PC-3 (cell line): ENCODE measurements at regions of chr10 and their contacts with region 1.

Region 1: DNA sequence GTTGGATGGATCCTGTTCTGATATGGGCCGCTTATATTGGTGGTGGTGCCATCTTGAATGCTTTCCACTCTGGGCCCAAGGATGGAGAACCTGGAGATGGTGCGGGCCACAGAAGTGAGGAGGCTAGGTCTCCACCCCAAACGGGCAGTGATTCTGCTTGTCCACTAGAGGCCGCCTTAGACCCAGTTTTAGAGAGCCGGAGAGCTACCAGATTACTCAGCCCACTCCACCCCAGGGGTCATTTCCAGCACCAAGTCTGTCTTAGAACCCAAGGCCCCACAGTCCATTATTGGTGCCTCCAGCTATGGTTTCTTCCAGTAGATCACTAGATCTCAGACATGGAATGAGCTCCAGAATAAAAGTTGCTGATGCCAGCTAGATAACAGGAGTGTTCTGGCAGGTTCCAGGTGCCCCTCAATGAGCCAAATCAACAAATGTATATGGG is 11.8 kb upstream of the CAMK2G start:
- DNase-seq: peak; percentile 100
- ATAC-seq: peak; percentile 49
- H3K4me3 ChIP-seq: no peak overlapping the region
- H3K27ac ChIP-seq: peak overlapping the region; percentile 82
- H3K4me1 ChIP-seq: peaks cover 57% of the 10 kb centered on the region
- H3K27me3 ChIP-seq: no peaks in the 10 kb centered on the region
- CTCF ChIP-seq: no peak

Region 2: GRCh38 chr10:73732931-73733623 is 153.0 kb before region 1 on chr10:
- CTCF ChIA-PET with region 1: no interaction called
- POLR2A ChIA-PET with region 1: no interaction called
- intact Hi-C with region 1: no loop called
- DNase-seq: no peak
- ATAC-seq: no peak
- H3K4me3 ChIP-seq: no peak overlapping the region
- H3K27ac ChIP-seq: no peak overlapping the region
- H3K4me1 ChIP-seq: peaks cover 9% of the 10 kb centered on the region
- H3K27me3 ChIP-seq: no peaks in the 10 kb centered on the region
- CTCF ChIP-seq: no peak

Region 3: DNA sequence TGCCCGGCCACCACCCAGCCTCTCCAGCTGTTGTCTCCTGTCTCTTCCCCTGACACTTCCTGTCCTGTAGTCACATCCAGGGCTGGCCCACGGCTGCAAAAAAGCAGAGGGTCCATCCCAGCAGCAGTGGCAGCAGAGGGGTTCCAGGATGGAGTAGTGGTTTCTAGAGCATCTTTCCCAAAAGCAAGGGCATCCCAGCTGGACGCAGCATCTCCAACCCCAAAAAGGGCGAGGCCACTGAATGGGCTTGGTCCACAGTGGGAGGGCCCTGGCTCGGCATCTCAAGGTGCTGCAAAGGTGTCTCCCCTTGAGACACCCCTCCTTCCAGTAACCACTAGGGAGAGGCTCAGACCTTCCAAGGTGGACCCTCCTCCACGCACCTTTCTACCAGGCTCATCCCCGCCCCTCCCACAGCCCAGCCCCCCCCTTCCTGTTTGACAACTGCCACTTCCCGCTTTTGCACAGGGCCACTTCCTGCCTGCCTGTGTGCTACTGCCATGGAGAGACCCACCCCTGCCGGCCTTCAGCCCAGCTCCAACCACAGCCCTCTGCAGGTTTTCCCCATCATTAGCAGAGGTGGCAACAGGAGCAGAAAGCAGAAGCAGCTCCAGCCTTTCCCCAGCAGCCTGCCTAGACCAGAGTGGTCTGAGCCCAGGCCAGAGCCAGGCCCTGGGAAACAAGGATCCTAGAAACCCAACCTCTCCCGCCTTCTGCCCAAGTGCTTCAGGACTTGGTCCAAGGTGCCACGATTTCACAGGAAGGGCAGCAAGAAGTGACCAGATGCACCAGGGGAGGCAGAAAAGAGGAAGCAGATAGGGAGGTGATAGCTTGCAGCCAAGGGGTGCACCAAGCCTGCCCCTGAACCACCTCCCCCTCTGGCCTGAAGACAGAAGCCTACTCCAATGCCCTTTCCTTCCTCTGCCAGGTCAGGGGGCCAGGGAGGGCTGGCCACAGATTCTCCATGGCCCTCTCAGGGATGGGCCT is 20.4 kb before region 1 on chr10:
- CTCF ChIA-PET with region 1: no interaction called
- POLR2A ChIA-PET with region 1: no interaction called
- intact Hi-C with region 1: no loop called
- DNase-seq: no peak
- ATAC-seq: peak; percentile 42
- H3K4me3 ChIP-seq: no peak overlapping the region
- H3K27ac ChIP-seq: no peak overlapping the region
- H3K4me1 ChIP-seq: no peaks in the 10 kb centered on the region
- H3K27me3 ChIP-seq: no peaks in the 10 kb centered on the region
- CTCF ChIP-seq: no peak

Region 4: DNA sequence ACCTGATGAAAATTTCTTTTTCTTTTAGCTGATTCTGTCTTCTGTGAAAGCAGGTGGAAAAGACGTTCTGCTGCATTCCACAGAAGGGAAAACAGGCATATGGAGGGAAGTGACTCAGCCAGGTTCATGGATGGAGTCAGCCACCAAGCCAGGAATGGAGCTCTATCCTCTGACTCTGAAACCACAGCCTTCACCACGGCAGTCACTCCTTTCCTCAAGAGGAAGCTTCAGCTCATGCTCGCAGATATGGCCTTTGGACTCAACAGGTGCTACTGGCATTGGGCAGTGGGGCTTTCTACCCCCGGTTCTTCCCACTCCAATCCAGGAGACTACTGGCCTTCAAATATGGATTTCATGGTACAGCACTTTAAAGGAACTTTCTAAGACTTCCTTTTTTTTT is 13.3 kb after region 1 on chr10:
- CTCF ChIA-PET with region 1: interaction called, 53 read pairs
- POLR2A ChIA-PET with region 1: interaction called, 71 read pairs
- intact Hi-C with region 1: loop called (anchors 1 kb)
- DNase-seq: peak; percentile 100
- ATAC-seq: peak; percentile 93
- H3K4me3 ChIP-seq: peak overlapping the region; percentile 8; the same call in 1 of the 2 replicates
- H3K27ac ChIP-seq: peak overlapping the region; percentile 78
- H3K4me1 ChIP-seq: peaks cover 54% of the 10 kb centered on the region
- H3K27me3 ChIP-seq: no peaks in the 10 kb centered on the region
- CTCF ChIP-seq: no peak

Region 5: GRCh38 chr10:73931767-73932619 is 45.9 kb after region 1 on chr10:
- CTCF ChIA-PET with region 1: interaction called, 317 read pairs
- POLR2A ChIA-PET with region 1: interaction called, 6 read pairs
- intact Hi-C with region 1: loop called (anchors 1 kb)
- DNase-seq: peak; percentile 100
- ATAC-seq: peak; percentile 96
- H3K4me3 ChIP-seq: peak overlapping the region; percentile 3; the same call in 1 of the 2 replicates
- H3K27ac ChIP-seq: peak overlapping the region; percentile 82
- H3K4me1 ChIP-seq: peaks cover 18% of the 10 kb centered on the region
- H3K27me3 ChIP-seq: no peaks in the 10 kb centered on the region
- CTCF ChIP-seq: no peak

Region 6: DNA sequence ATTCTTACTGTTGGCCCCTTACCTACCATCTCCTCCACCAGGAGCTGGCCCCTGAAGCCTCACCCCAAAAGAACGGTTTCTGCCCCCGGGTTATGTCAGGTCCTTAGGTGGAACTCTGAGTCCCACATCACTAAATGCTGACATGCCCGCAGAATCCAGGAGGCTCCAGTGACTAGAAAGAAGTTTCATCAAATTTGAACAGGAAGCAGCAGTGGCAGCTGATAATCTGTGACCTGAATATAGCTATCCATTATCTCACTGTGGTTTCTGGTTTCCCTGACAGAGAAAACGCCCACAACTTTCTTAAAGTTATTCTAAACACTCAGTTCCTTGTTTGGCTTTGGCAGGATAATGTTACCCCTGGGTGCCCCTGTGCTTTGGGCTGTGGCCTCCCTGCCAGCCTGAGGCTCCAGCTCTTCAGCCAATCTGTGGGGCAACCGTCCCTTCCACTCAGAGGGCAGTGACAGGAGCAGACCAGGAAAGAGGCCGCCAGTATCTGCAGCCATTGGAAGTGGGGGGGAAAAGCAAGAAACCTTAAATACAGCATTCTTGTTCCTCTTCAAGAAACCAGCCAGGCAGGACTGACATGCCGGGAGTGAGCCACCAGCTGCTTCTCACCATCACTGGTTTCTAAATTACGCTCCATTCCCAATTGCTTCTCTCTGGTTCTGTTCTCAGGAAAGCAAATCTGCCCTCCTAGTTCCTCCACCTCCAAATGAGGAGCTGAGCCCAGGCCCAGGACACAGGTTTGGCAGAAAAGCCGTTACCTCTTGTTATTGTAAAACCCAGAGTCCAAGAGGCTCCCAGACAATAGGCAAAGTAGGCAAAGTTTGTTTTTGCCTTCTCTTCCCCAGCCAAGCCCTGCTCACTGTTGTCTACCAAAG is 70.6 kb after region 1 on chr10:
- CTCF ChIA-PET with region 1: interaction called, 8 read pairs
- POLR2A ChIA-PET with region 1: no interaction called
- intact Hi-C with region 1: loop called (anchors 1 kb)
- DNase-seq: peak; percentile 67
- ATAC-seq: peak; percentile 39
- H3K4me3 ChIP-seq: no peak overlapping the region
- H3K27ac ChIP-seq: no peak overlapping the region
- H3K4me1 ChIP-seq: peaks cover 11% of the 10 kb centered on the region
- H3K27me3 ChIP-seq: no peaks in the 10 kb centered on the region
- CTCF ChIP-seq: no peak

Region 7: GRCh38 chr10:74035303-74035702 is 149.2 kb after region 1 on chr10:
- CTCF ChIA-PET with region 1: interaction called, 26 read pairs
- POLR2A ChIA-PET with region 1: interaction called, 3 read pairs
- intact Hi-C with region 1: loop called (anchors 1 kb)
- DNase-seq: peak; percentile 76
- ATAC-seq: peak; percentile 51
- H3K4me3 ChIP-seq: no peak overlapping the region
- H3K27ac ChIP-seq: no peak overlapping the region
- H3K4me1 ChIP-seq: no peaks in the 10 kb centered on the region
- H3K27me3 ChIP-seq: no peaks in the 10 kb centered on the region
- CTCF ChIP-seq: peak; percentile 98

Region 8: DNA sequence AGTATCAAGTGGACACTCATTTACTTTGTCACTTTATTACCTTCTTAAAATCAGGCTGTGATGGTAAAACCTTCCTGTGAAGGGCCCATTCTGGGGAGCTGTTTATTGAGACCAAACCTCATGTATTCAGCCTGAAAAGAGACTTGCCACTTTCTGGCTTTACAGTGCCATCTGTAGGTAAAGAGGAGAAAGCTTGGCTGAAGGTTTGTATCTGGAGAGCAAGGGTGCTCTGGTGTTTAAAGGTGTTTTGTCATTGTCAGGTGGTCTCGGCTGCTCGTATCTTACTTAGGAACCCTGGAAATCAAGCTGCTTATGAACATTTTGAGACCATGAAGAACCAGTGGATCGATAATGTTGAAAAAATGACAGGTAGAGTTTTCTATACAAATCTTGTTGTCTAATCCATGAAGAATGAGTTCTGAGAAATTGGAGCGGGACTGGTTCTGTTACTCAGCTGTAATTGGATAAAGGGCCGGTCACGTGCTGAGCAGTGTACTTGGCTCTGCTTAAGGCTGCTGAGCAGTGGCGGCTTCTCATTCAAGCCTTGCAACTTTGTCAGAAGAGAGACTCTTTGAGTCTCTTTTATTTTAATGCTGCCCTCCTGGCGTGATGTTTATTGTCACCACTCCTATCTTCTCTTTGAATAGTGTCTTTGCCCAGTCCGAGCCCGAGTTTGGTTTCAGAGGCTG is 217.6 kb after region 1 on chr10:
- CTCF ChIA-PET with region 1: interaction called, 31 read pairs
- POLR2A ChIA-PET with region 1: no interaction called
- intact Hi-C with region 1: loop called (anchors 1 kb)
- DNase-seq: peak; percentile 90
- ATAC-seq: peak; percentile 87
- H3K4me3 ChIP-seq: no peak overlapping the region
- H3K27ac ChIP-seq: no peak overlapping the region
- H3K4me1 ChIP-seq: no peaks in the 10 kb centered on the region
- H3K27me3 ChIP-seq: no peaks in the 10 kb centered on the region
- CTCF ChIP-seq: peak; percentile 100